Dorsolateral prefrontal cortex (tissue), 120 donors: ENCODE measurements at regions of chr1 and their contacts with region 1.

Region 1: DNA sequence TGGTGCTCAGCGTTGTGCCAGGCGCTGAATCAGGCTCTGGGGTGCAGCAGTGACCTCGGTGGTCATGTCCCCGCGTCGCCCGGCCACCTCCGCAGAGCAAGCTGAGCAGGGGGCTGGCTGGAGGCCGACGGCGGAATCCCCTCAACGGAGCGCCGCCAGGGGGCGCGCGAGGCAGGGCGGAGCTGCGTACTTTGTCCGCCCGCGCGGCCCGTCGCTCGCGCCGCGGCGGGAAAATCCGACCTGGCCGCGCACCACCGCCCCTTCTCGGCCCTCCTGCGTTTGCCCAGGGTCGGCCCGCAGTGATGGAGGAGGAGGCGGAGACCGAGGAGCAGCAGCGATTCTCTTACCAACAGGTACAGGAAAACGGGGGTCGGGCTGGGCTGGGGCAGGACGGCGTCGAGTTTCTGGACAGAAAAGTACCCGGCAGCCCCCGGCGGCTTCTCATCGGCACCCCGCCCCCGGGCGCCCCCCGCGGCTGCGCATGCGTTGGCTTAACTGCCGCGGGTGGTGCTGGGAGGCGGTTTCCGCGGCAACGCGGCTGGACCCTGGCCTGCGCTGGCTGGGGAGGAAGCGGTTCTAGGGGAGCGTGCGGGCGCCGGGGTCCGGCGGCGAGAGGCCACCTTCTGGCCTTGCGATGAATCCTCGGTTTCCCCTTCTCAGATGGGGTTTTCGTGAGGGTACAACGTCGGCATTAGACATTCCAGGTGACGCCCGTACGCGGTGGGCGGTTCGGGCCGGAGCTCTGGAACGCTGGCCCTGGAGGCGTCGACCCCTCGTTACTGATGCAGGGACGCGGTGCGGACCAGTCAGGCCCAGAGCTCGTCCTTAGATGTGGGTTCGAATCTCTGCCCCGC is at the start of gene CENPS:
- DNase-seq: peak; percentile 48 to 89 (median 79)
- H3K4me3 ChIP-seq: peak within 1 kb of the TSS; percentile 60 to 98 (median 87)
- H3K27ac ChIP-seq: peak within 1 kb of the TSS in 57 of 59 donors; percentile 26 to 90 (median 72)
- H3K27me3 ChIP-seq: no peaks in the 10 kb centered on the region
- CTCF ChIP-seq: peak; percentile 86 to 100 (median 96)
- total RNA-seq, gene CENPS: 7.2 to 24.1 (median 14.9) TPM

Region 2: GRCh38 chr1:9629445-9630201 is 800.8 kb before region 1 on chr1:
- intact Hi-C with region 1: loop called (anchors 1 to 10 kb)
- DNase-seq: no peak
- H3K4me3 ChIP-seq: peak overlapping the region in 1 of 59 donors; percentile 9
- H3K27ac ChIP-seq: peak overlapping the region in 8 of 59 donors; percentile 4 to 38 (median 16)
- H3K27me3 ChIP-seq: no peaks in the 10 kb centered on the region
- CTCF ChIP-seq: no peak

Region 3: DNA sequence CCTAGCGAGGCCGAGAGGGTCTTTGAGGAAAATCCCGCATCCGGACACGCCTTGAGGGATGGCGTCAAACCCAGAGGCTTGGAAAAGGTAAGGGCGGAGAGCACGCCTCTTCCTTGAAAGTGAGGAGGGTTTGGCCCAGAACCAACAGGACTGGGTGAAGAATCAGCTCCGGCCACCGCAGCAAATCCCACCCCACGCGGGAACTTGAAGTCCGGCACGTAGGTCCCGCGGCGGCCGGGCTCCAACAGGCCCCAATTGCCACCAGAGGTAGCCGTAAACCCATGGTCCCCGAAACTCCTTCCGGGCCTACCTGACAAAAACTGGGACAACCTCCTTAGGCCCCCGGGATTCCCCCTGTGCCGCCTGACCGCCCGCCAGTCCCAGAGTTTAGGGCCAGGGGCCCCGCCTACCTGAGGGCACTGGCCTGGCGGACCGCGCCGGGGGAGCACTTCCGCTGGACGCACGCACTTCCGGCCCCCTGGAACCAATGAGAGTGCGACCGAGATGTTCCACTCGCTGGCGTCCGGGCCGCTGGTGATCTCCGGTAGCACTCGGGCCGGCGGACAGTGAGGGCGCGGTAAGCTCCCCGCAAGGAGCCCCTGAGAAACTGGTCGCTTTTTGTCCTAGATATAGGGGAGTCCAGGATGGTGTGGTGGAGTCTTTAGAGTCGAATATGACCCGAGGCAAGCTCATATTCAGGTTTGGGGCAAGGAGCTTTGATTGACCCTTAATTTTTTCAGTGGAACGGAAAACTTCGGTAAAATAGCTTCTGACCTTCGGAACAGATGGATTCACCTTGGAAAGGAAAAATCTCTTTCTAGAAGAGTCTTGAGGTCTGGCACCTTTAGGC is 487.3 kb before region 1 on chr1 and contains the starts of genes LZIC and NMNAT1:
- intact Hi-C with region 1: loop called in 1 of 2 experiments (anchors 10 kb)
- DNase-seq: peak; percentile 90 to 95 (median 94)
- H3K4me3 ChIP-seq: peak within 1 kb of the TSS; percentile 70 to 99 (median 92)
- H3K27ac ChIP-seq: peak within 1 kb of the TSS; percentile 52 to 96 (median 85)
- H3K27me3 ChIP-seq: no peaks in the 10 kb centered on the region
- CTCF ChIP-seq: peak in 48 of 56 donors; percentile 2 to 68 (median 40)
- total RNA-seq, gene LZIC: 21.5 to 45.4 (median 31.9) TPM
- total RNA-seq, gene NMNAT1: 6.4 to 18.0 (median 10.1) TPM

Region 4: GRCh38 chr1:10378081-10378841 is 52.2 kb before region 1 on chr1:
- intact Hi-C with region 1: loop called (anchors 1 to 10 kb)
- DNase-seq: peak in 5 of 10 donors; percentile 37 to 64 (median 48)
- H3K4me3 ChIP-seq: no peak overlapping the region
- H3K27ac ChIP-seq: peak overlapping the region in 58 of 59 donors; percentile 10 to 90 (median 76)
- H3K27me3 ChIP-seq: no peaks in the 10 kb centered on the region
- CTCF ChIP-seq: no peak

Region 5: GRCh38 chr1:10472220-10473144 is 42.0 kb after region 1 on chr1 and contains the start of gene DFFA:
- intact Hi-C with region 1: loop called (anchors 1 to 5 kb)
- DNase-seq: peak; percentile 91 to 98 (median 96)
- H3K4me3 ChIP-seq: peak within 1 kb of the TSS; percentile 55 to 99 (median 89)
- H3K27ac ChIP-seq: peak within 1 kb of the TSS in 52 of 59 donors; percentile 2 to 88 (median 64)
- H3K27me3 ChIP-seq: no peaks in the 10 kb centered on the region
- CTCF ChIP-seq: peak in 37 of 56 donors; percentile 7 to 55 (median 30)
- total RNA-seq, gene DFFA: 20.0 to 49.9 (median 32.7) TPM